OCI-LY7 (cell line): ENCODE measurements at regions of chr2 and their contacts with region 1.

Region 1: GRCh38 chr2:98026927-98027522 is 31.3 kb upstream of the TMEM131 start:
- DNase-seq: peak; percentile 86
- H3K4me3 ChIP-seq: peak overlapping the region; percentile 58
- H3K27ac ChIP-seq: peak overlapping the region; percentile 90
- H3K4me1 ChIP-seq: peaks cover 63% of the 10 kb centered on the region
- CTCF ChIP-seq: no peak

Region 2: GRCh38 chr2:97957432-97958186 is 69.4 kb before region 1 on chr2:
- CTCF ChIA-PET with region 1: no interaction called
- POLR2A ChIA-PET with region 1: interaction called, 5 read pairs
- intact Hi-C with region 1: loop called (anchors 5 kb)
- DNase-seq: peak; percentile 55
- H3K4me3 ChIP-seq: peak overlapping the region; percentile 48
- H3K27ac ChIP-seq: peak overlapping the region; percentile 71
- H3K4me1 ChIP-seq: peaks cover 57% of the 10 kb centered on the region
- CTCF ChIP-seq: no peak

Region 3: GRCh38 chr2:98012561-98012991 is 14.4 kb before region 1 on chr2:
- CTCF ChIA-PET with region 1: interaction called, 3 read pairs
- POLR2A ChIA-PET with region 1: interaction called, 8 read pairs
- intact Hi-C with region 1: loop called (anchors 1 kb)
- DNase-seq: peak; percentile 88
- H3K4me3 ChIP-seq: peak overlapping the region; percentile 61
- H3K27ac ChIP-seq: peak overlapping the region; percentile 89
- H3K4me1 ChIP-seq: peaks cover 82% of the 10 kb centered on the region
- CTCF ChIP-seq: no peak

Region 4: GRCh38 chr2:98086491-98087446 is 59.7 kb after region 1 on chr2 and contains the start of gene VWA3B:
- CTCF ChIA-PET with region 1: no interaction called
- POLR2A ChIA-PET with region 1: no interaction called
- intact Hi-C with region 1: loop called (anchors 2 kb)
- DNase-seq: peak; percentile 70
- H3K4me3 ChIP-seq: peak within 1 kb of the TSS; percentile 73
- H3K27ac ChIP-seq: no peak within 1 kb of the TSS
- H3K4me1 ChIP-seq: peaks cover 45% of the 10 kb centered on the region
- CTCF ChIP-seq: no peak
- total RNA-seq, gene VWA3B: not detected in 2 replicates